ENCODE measurements at regions of chr17 and their contacts with region 1.

Region 1: DNA sequence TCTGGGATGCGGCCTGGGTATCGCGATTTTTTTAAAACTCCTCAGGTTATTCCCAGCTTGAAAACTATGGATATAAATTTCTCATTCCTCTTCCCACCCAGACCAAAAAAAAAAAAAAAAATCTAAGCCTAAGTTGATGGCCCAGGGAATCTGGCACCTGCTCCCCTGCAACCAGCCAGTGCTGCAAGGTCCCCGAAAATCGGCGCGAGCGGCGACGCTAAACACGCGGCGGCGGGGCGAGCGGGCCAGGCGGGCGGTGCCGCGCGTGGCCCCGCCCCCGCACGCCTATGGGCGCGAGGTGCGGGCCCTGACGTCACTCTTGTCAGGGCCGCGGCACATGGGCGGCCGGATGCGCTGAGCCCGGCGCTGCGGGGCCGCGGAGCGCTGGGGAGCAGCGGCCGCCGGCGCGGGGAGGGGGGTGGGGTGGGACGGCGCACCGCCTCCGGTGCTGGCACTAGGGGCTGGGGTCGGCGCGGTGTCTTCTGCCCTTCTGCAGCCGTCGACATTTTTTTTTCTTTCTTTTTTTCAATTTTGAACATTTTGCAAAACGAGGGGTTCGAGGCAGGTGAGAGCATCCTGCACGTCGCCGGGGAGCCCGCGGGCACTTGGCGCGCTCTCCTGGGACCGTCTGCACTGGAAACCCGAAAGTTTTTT is at the start of gene HLF:
- DNase-seq: peak; percentile 86 to 91 (median 88)
- H3K4me3 ChIP-seq: peak within 1 kb of the TSS; percentile 54
- H3K27ac ChIP-seq: peak within 1 kb of the TSS; percentile 87 to 90
- H3K4me1 ChIP-seq: peaks cover 3% of the 10 kb centered on the region
- H3K27me3 ChIP-seq: no peaks in the 10 kb centered on the region
- CTCF ChIP-seq: no peak
- EP300 ChIP-seq: no peak
- POLR2A ChIP-seq: peak; percentile 72
- total RNA-seq, gene HLF: 38.9 to 106 (median 54.3) TPM

Region 2: DNA sequence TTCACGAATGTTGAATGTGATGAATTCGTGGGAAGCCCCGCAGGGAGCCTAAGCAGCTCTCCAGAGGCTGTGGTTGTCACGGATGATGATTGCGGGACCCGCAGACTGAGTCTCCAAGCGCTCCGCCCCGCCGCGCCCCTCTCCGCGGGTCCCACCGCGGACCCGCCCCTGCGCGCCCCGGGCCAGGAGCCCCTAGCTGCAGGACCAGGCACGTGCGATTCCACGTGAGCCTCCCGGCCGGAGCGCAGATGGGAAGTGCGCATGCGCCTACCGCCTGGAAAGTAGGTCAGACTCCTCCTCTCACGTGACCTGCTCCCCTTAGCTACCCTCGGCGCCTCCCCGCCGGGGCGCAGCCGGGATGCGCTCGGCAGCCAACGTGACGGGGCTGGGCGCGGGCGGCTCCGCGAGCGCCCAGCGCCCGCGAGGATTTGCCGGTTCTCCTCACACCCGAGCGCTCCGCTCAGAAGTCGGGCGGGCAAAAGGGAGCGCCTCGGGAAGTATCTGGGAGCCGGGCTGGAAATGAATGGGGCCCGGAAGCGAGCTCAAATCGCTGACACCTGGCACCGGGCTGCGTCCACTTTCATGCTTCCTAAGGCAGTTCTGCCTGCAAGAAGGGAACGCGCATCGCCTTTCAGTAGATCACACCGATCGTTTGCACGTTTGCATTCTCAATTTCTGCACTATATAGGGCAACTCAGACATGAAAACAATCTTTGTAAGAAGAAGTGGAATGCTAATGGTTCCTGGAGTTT is 26.4 kb before region 1 on chr17:
- intact Hi-C with region 1: loop called in 1 of 4 experiments (anchors 2 kb)
- DNase-seq: peak; percentile 97 to 99 (median 98)
- H3K4me3 ChIP-seq: peak overlapping the region; percentile 41
- H3K27ac ChIP-seq: peak overlapping the region; percentile 58 to 87
- H3K4me1 ChIP-seq: peaks cover 3% of the 10 kb centered on the region
- H3K27me3 ChIP-seq: no peaks in the 10 kb centered on the region
- CTCF ChIP-seq: peak in 2 of 3 donors; percentile 7 to 22
- EP300 ChIP-seq: no peak
- POLR2A ChIP-seq: no peak

Region 3: DNA sequence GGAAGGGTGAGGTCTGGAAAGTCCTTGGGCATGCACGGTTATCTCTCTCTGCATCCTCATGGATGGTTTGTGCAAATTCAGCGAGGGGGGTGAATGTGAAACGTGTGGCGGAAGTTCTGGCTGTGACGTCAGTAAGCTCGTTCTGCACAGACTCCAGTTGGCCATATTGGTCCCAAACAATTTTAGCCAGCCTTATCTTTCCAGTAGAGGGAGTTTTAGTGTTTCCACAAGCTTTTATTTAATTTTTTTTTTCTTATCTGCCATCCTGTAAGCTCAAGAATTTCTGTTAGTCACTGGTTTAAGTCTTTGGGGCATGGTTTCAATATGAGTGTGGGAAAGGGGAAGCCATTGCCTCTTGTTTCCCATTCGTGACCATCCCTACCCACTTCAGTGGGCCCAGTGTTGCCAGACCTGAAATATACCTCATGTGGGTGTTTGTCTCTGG is 39.0 kb after region 1 on chr17:
- intact Hi-C with region 1: loop called in 1 of 4 experiments (anchors 5 kb)
- DNase-seq: no peak
- H3K4me3 ChIP-seq: no peak overlapping the region
- H3K27ac ChIP-seq: no peak overlapping the region
- H3K4me1 ChIP-seq: peaks cover 3% of the 10 kb centered on the region
- H3K27me3 ChIP-seq: no peaks in the 10 kb centered on the region
- CTCF ChIP-seq: no peak
- EP300 ChIP-seq: no peak
- POLR2A ChIP-seq: no peak

Region 4: DNA sequence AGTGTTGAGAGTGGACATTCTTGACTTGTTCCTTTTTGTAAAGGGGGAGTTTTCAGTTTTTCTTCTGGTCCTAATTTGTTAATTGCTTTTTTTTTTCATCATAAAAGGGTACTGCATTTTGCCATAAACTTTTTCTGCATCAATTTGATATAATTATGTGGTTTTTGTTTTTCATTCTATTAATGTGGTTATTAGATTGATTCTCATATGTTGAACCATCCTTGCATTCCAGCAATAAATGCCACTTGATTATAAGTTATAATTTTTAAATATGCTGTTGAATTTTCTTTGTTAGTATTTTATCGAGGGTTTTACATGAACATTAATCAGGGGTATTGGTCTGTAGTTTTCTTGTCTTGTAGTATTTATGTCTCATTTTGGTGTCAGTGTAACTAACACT is 333.7 kb after region 1 on chr17:
- intact Hi-C with region 1: no loop called
- DNase-seq: no peak
- H3K4me3 ChIP-seq: no peak overlapping the region
- H3K27ac ChIP-seq: no peak overlapping the region
- H3K4me1 ChIP-seq: no peaks in the 10 kb centered on the region
- H3K27me3 ChIP-seq: no peaks in the 10 kb centered on the region
- CTCF ChIP-seq: no peak
- EP300 ChIP-seq: no peak
- POLR2A ChIP-seq: no peak